H1 (cell line): ENCODE measurements at regions of chr4 and their contacts with region 1.

Region 1: GRCh38 chr4:3791978-3792542 is 25.9 kb downstream of the ADRA2C start:
- DNase-seq: peak; percentile 47 to 95
- H3K4me3 ChIP-seq: no peak overlapping the region
- H3K27ac ChIP-seq: no peak overlapping the region
- H3K4me1 ChIP-seq: peaks cover 0 to 3% (median 0%) of the 10 kb centered on the region in 4 experiments; a peak in 2 of 7 replicates
- H3K27me3 ChIP-seq: no peaks in the 10 kb centered on the region; a peak in 1 of 7 replicates
- CTCF ChIP-seq: no peak
- EP300 ChIP-seq: no peak
- POLR2A ChIP-seq: no peak
- RAD21 ChIP-seq: peak in 1 of 2 experiments; percentile 31; a peak in 2 of 4 replicates

Region 2: DNA sequence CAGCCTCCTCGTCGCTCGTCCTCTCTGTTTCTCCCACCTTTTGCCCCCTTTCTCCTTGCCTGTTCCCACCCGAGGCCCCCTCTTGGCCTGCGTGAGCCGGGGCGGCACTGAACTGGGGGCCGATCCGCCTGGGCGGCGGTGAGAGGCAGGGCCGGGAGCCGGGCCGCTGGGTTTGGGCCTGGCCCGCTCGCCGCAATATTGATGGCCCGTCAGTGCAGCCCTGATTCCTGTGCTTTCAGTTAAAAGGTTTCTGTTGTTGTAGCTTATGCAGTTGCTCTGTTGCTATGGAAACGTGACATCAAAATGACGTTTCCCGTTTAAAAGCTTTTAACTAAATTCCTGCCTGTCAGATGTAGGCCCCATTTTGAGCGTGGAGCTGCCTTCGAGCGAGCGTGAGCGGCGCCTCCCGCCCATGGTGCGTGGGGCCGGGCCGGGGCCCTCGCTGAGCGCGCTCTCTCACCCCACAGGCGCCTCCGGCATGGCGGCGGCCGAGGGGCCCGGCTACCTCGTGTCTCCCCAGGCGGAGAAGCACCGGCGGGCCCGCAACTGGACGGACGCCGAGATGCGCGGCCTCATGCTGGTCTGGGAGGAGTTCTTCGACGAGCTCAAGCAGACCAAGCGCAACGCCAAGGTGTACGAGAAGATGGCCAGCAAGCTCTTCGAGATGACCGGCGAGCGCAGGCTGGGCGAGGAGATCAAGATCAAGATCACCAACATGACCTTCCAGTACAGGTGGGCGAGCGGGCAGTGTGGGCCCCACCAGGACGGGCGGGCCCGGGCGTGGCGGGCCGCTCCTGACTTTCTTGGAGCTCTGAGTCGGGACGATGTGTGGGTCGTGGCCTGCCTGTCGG is 543.0 kb before region 1 on chr4 and contains the start of gene MSANTD1:
- CTCF ChIA-PET with region 1: no interaction called
- POLR2A ChIA-PET with region 1: no interaction called
- DNase-seq: no peak
- H3K4me3 ChIP-seq: no peak within 1 kb of the TSS
- H3K27ac ChIP-seq: no peak within 1 kb of the TSS
- H3K4me1 ChIP-seq: peaks cover 0 to 8% (median 0%) of the 10 kb centered on the region in 4 experiments; a peak in 3 of 7 replicates
- H3K27me3 ChIP-seq: no peaks in the 10 kb centered on the region
- CTCF ChIP-seq: no peak
- EP300 ChIP-seq: no peak
- POLR2A ChIP-seq: no peak
- RAD21 ChIP-seq: no peak
- total RNA-seq, gene MSANTD1: 0.45 and 0.78 TPM in 2 replicates

Region 3: GRCh38 chr4:3807822-3808496 is 15.9 kb after region 1 on chr4:
- CTCF ChIA-PET with region 1: interaction called, 17 read pairs
- POLR2A ChIA-PET with region 1: interaction called, 3 read pairs
- DNase-seq: no peak
- H3K4me3 ChIP-seq: peak overlapping the region in 2 of 4 experiments; percentile 2 to 18; a peak in 2 of 8 replicates
- H3K27ac ChIP-seq: no peak overlapping the region
- H3K4me1 ChIP-seq: peaks cover 0 to 7% (median 5%) of the 10 kb centered on the region in 4 experiments; a peak in 6 of 7 replicates
- H3K27me3 ChIP-seq: peaks cover 0 to 3% (median 1%) of the 10 kb centered on the region in 4 experiments; a peak in 1 of 7 replicates
- CTCF ChIP-seq: no peak
- EP300 ChIP-seq: no peak
- POLR2A ChIP-seq: no peak
- RAD21 ChIP-seq: no peak

Region 4: GRCh38 chr4:3822230-3822947 is 30.3 kb after region 1 on chr4:
- CTCF ChIA-PET with region 1: interaction called, 38 read pairs
- POLR2A ChIA-PET with region 1: interaction called, 4 read pairs
- DNase-seq: no peak
- H3K4me3 ChIP-seq: no peak overlapping the region
- H3K27ac ChIP-seq: no peak overlapping the region
- H3K4me1 ChIP-seq: peaks cover 0 to 13% (median 5%) of the 10 kb centered on the region in 4 experiments; a peak in 5 of 7 replicates
- H3K27me3 ChIP-seq: no peaks in the 10 kb centered on the region; a peak in 1 of 7 replicates
- CTCF ChIP-seq: no peak
- EP300 ChIP-seq: no peak
- POLR2A ChIP-seq: no peak
- RAD21 ChIP-seq: no peak

Region 5: GRCh38 chr4:3827616-3828492 is 35.8 kb after region 1 on chr4:
- CTCF ChIA-PET with region 1: interaction called, 38 read pairs
- POLR2A ChIA-PET with region 1: interaction called, 4 read pairs
- DNase-seq: no peak
- H3K4me3 ChIP-seq: no peak overlapping the region
- H3K27ac ChIP-seq: no peak overlapping the region; the same call in 1 of the 2 replicates
- H3K4me1 ChIP-seq: peaks cover 0 to 23% (median 19%) of the 10 kb centered on the region in 4 experiments; a peak in 6 of 7 replicates
- H3K27me3 ChIP-seq: no peaks in the 10 kb centered on the region; a peak in 1 of 7 replicates
- CTCF ChIP-seq: no peak
- EP300 ChIP-seq: no peak
- POLR2A ChIP-seq: no peak
- RAD21 ChIP-seq: no peak

Region 6: DNA sequence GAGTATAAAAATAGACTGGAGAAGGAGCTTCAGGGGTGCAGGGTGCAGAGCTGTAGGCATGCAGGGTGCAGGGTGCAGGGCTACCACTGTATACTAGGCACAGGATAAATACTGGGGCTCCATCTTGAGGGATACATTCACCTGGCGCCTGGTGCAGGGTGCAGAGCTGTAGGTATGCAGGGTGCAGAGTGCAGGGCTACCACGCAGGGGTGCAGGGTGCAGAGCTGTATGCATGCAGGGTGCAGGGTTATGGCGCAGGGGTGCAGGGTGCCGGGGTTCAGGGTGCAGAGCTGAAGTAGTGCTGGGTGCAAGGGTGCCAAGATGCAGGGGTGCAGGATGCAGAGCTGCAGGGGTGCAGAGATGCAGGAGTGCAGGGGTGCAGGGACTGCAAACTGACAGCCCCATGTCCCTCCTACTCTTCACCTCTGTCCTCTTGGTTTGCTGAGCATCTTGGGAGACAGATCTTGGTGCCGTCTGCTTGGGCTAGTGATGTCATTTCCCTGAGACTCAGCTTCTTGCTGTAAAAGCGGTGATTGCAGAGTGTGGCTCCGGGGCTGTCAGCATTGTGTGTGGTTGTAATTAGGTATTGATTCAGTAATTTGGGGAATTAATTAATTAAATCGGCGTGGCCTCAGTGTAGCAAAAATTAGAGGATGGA is 65.3 kb after region 1 on chr4:
- CTCF ChIA-PET with region 1: interaction called, 29 read pairs
- POLR2A ChIA-PET with region 1: no interaction called
- DNase-seq: no peak
- H3K4me3 ChIP-seq: no peak overlapping the region
- H3K27ac ChIP-seq: no peak overlapping the region
- H3K4me1 ChIP-seq: peaks cover 0 to 13% (median 8%) of the 10 kb centered on the region in 4 experiments; a peak in 5 of 7 replicates
- H3K27me3 ChIP-seq: no peaks in the 10 kb centered on the region; a peak in 1 of 7 replicates
- CTCF ChIP-seq: no peak
- EP300 ChIP-seq: no peak
- POLR2A ChIP-seq: no peak
- RAD21 ChIP-seq: no peak

Region 7: GRCh38 chr4:3862640-3863420 is 70.8 kb after region 1 on chr4:
- CTCF ChIA-PET with region 1: interaction called, 29 read pairs
- POLR2A ChIA-PET with region 1: no interaction called
- DNase-seq: peak; percentile 70 to 87
- H3K4me3 ChIP-seq: peak overlapping the region; percentile 4 to 51 (median 24); a peak in 5 of 8 replicates
- H3K27ac ChIP-seq: peak overlapping the region; percentile 62
- H3K4me1 ChIP-seq: peaks cover 3 to 23% (median 15%) of the 10 kb centered on the region in 4 experiments
- H3K27me3 ChIP-seq: no peaks in the 10 kb centered on the region
- CTCF ChIP-seq: no peak
- EP300 ChIP-seq: no peak
- POLR2A ChIP-seq: peak in 1 of 2 experiments; percentile 44; a peak in 1 of 3 replicates
- RAD21 ChIP-seq: no peak; a peak in 1 of 4 replicates

Region 8: DNA sequence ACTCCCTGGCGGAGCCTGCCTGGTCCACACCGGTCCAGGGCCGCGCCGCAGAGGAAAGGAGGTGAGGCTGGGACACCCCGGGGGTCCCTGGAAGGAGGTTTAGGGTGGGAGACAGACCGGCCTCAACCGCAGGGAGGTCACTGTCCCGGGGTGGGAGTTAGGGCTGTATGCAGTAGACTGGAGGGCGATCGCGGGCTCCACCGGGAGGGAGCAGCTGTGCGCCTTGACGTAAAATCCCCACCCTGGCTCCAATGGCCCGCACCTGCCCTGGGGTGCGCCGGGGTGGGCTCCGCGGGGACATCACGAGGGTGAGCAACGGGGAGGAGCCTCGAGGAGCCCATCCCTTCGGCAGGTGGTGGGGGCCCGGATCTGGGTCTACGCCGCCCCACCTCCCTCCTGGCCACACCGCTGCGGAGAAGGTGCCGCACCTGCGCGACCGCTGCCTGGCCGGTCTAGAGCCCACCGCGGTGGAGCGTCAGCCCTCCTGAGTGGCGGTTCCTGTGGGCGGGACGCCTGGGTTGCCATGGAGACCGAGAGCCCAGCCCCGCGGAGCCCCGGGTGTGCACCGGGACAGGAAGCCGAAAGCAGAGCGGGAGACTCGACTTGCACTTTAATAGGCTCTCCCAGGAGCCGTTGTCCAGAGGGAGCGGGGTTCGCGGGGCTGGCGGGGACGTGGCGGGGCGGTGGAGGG is 79.3 kb after region 1 on chr4:
- CTCF ChIA-PET with region 1: interaction called, 12 read pairs
- POLR2A ChIA-PET with region 1: interaction called, 3 read pairs
- DNase-seq: peak; percentile 61 to 92
- H3K4me3 ChIP-seq: peak overlapping the region; percentile 26 to 56 (median 44)
- H3K27ac ChIP-seq: no peak overlapping the region
- H3K4me1 ChIP-seq: peaks cover 0 to 19% (median 8%) of the 10 kb centered on the region in 4 experiments; a peak in 6 of 7 replicates
- H3K27me3 ChIP-seq: peaks cover 7 to 40% (median 27%) of the 10 kb centered on the region in 4 experiments
- CTCF ChIP-seq: no peak
- EP300 ChIP-seq: no peak
- POLR2A ChIP-seq: no peak
- RAD21 ChIP-seq: no peak